Endothelial cell of umbilical vein (primary cell): ENCODE measurements at regions of chr1 and their contacts with region 1.

Region 1: DNA sequence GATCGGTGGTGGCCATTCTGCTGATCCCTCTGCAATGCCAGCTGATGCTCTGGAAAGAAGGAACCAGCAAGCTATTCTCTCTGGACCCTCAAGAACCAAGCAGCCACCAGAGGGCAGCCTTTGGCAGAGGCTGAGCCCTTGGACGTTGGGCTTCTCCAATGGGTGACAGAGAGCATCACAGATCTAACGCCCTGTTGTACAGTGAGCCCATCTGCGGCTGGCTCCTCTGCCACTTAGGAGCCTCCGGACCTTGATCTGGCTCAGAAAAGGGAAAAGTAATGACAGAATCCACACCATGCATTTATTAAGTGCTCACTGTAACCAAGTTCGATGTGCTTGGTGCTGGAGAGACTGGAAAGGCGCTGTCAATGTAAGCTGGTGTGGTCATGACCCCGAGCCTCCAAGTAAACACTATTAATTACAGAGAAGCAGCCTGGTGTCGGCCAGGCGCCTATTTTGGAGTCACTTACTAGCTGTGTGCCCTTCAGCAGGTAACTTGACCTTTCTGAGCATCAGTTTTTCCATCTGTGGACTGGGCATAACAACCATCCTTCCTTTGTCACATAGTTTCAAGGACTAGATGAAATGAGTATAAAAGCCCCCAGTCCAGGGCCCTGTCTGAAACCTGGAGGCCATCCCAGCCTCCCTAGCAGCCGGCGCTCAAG is 34.9 kb downstream of the ECE1 start:
- DNase-seq: peak; percentile 85
- H3K4me3 ChIP-seq: no peak overlapping the region
- H3K27ac ChIP-seq: no peak overlapping the region
- H3K4me1 ChIP-seq: peaks cover 27% of the 10 kb centered on the region
- H3K27me3 ChIP-seq: no peaks in the 10 kb centered on the region
- CTCF ChIP-seq: peak; percentile 78 to 88
- POLR2A ChIP-seq: no peak

Region 2: GRCh38 chr1:21232044-21232443 is 23.4 kb before region 1 on chr1:
- CTCF ChIA-PET with region 1: interaction called, 34 read pairs
- POLR2A ChIA-PET with region 1: no interaction called
- dilution Hi-C with region 1: no loop called
- intact Hi-C with region 1: loop called (anchors 1 kb)
- DNase-seq: peak; percentile 67
- H3K4me3 ChIP-seq: no peak overlapping the region
- H3K27ac ChIP-seq: no peak overlapping the region
- H3K4me1 ChIP-seq: no peaks in the 10 kb centered on the region
- H3K27me3 ChIP-seq: no peaks in the 10 kb centered on the region
- CTCF ChIP-seq: peak; percentile 68 to 73
- POLR2A ChIP-seq: no peak

Region 3: GRCh38 chr1:21280011-21280471 is 24.6 kb after region 1 on chr1:
- CTCF ChIA-PET with region 1: interaction called, 45 read pairs
- POLR2A ChIA-PET with region 1: interaction called, 8 read pairs
- dilution Hi-C with region 1: no loop called
- intact Hi-C with region 1: no loop called
- DNase-seq: peak; percentile 92
- H3K4me3 ChIP-seq: peak overlapping the region in 1 of 3 experiments; percentile 68
- H3K27ac ChIP-seq: peak overlapping the region; percentile 98
- H3K4me1 ChIP-seq: peaks cover 64% of the 10 kb centered on the region
- H3K27me3 ChIP-seq: no peaks in the 10 kb centered on the region
- CTCF ChIP-seq: no peak
- POLR2A ChIP-seq: peak; percentile 40

Region 4: DNA sequence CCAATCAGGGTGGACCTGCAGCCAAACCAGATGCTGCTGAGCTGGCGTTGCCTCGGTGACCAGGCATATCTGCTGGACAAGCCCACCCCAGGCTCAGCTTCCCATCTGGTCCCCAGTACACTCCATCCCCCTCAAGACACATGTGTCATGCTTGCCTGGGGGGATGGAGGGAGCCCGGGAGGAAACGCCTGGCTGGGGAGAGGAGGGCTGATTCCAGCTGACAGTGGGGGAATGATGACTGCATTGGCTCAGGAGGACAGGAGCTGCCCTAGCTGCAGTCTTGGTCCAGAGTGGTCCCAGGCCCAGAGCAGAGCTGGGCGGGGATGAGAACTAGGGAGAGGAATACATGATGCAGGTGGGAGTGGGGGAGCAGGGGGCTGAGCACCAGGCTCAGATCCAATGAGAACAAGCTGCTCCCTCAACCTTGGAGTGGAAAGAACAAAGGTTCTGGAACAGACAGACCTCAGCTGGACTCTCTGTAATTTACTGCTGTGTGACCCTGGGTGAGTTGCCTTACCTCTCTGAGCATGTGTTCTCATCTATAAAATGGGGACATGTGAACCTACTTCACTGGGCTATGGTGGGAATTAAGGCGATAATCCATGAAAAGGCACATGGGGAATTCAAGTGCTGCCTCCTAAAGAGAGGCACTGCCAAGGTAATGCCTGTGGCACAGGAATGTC is 57.9 kb after region 1 on chr1:
- CTCF ChIA-PET with region 1: interaction called, 11 read pairs
- POLR2A ChIA-PET with region 1: no interaction called
- dilution Hi-C with region 1: no loop called
- intact Hi-C with region 1: no loop called
- DNase-seq: peak; percentile 56
- H3K4me3 ChIP-seq: no peak overlapping the region
- H3K27ac ChIP-seq: no peak overlapping the region
- H3K4me1 ChIP-seq: peaks cover 28% of the 10 kb centered on the region
- H3K27me3 ChIP-seq: no peaks in the 10 kb centered on the region
- CTCF ChIP-seq: no peak
- POLR2A ChIP-seq: no peak

Region 5: GRCh38 chr1:21344750-21345443 is 89.5 kb after region 1 on chr1:
- CTCF ChIA-PET with region 1: interaction called, 29 read pairs
- POLR2A ChIA-PET with region 1: no interaction called
- dilution Hi-C with region 1: no loop called
- intact Hi-C with region 1: no loop called
- DNase-seq: no peak
- H3K4me3 ChIP-seq: peak overlapping the region; percentile 40 to 82 (median 66)
- H3K27ac ChIP-seq: peak overlapping the region; percentile 14
- H3K4me1 ChIP-seq: peaks cover 38% of the 10 kb centered on the region
- H3K27me3 ChIP-seq: no peaks in the 10 kb centered on the region
- CTCF ChIP-seq: no peak
- POLR2A ChIP-seq: no peak

Region 6: GRCh38 chr1:21573971-21574465 is 318.6 kb after region 1 on chr1:
- CTCF ChIA-PET with region 1: no interaction called
- POLR2A ChIA-PET with region 1: no interaction called
- dilution Hi-C with region 1: no loop called
- intact Hi-C with region 1: loop called (anchors 10 kb)
- DNase-seq: peak; percentile 99
- H3K4me3 ChIP-seq: no peak overlapping the region
- H3K27ac ChIP-seq: peak overlapping the region; percentile 87
- H3K4me1 ChIP-seq: peaks cover 17% of the 10 kb centered on the region
- H3K27me3 ChIP-seq: peaks cover 0 to 8% of the 10 kb centered on the region in 2 experiments
- CTCF ChIP-seq: peak; percentile 34 to 50
- POLR2A ChIP-seq: peak; percentile 31